ENCODE measurements at regions of chr13 and their contacts with region 1.

Region 1: GRCh38 chr13:48542581-48543341 is 9.9 kb upstream of the RCBTB2 start:
- DNase-seq: no peak
- H3K4me3 Mint-ChIP-seq: no peak overlapping the region
- H3K27ac Mint-ChIP-seq: no peak overlapping the region
- H3K4me1 Mint-ChIP-seq: no peaks in the 10 kb centered on the region
- H3K27me3 Mint-ChIP-seq: peaks cover 2% of the 10 kb centered on the region

Region 2: DNA sequence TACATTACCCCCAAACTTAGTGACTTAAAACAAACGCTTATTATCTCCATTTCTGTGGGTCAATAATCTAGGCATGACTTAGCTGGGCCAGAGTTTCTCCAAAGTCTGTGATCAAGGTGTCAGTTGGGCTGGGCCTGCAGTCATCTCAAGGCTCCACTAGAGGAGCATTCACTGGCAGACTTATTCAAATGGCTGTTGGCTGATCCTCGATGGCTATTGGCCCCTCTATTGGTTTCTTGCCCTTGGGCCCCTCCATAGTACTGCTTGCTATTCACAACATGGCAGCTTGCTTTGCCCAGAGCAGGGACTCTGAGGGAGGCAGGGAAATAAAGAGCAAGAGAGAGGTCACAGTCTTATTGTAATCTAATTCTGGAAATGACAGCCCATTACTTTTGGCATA is 67.5 kb before region 1 on chr13:
- CTCF ChIA-PET with region 1: no interaction called
- intact Hi-C with region 1: no loop called
- DNase-seq: no peak
- H3K4me3 Mint-ChIP-seq: no peak overlapping the region
- H3K27ac Mint-ChIP-seq: no peak overlapping the region
- H3K4me1 Mint-ChIP-seq: no peaks in the 10 kb centered on the region
- H3K27me3 Mint-ChIP-seq: no peaks in the 10 kb centered on the region

Region 3: GRCh38 chr13:48515732-48516131 is 27.0 kb before region 1 on chr13:
- CTCF ChIA-PET with region 1: no interaction called
- intact Hi-C with region 1: loop called (anchors 2 kb)
- DNase-seq: no peak
- H3K4me3 Mint-ChIP-seq: no peak overlapping the region
- H3K27ac Mint-ChIP-seq: no peak overlapping the region
- H3K4me1 Mint-ChIP-seq: no peaks in the 10 kb centered on the region
- H3K27me3 Mint-ChIP-seq: no peaks in the 10 kb centered on the region

Region 4: GRCh38 chr13:48527955-48528354 is 14.8 kb before region 1 on chr13:
- CTCF ChIA-PET with region 1: no interaction called
- intact Hi-C with region 1: no loop called
- DNase-seq: no peak
- H3K4me3 Mint-ChIP-seq: no peak overlapping the region
- H3K27ac Mint-ChIP-seq: no peak overlapping the region
- H3K4me1 Mint-ChIP-seq: peaks cover 11% of the 10 kb centered on the region
- H3K27me3 Mint-ChIP-seq: no peaks in the 10 kb centered on the region

Region 5: DNA sequence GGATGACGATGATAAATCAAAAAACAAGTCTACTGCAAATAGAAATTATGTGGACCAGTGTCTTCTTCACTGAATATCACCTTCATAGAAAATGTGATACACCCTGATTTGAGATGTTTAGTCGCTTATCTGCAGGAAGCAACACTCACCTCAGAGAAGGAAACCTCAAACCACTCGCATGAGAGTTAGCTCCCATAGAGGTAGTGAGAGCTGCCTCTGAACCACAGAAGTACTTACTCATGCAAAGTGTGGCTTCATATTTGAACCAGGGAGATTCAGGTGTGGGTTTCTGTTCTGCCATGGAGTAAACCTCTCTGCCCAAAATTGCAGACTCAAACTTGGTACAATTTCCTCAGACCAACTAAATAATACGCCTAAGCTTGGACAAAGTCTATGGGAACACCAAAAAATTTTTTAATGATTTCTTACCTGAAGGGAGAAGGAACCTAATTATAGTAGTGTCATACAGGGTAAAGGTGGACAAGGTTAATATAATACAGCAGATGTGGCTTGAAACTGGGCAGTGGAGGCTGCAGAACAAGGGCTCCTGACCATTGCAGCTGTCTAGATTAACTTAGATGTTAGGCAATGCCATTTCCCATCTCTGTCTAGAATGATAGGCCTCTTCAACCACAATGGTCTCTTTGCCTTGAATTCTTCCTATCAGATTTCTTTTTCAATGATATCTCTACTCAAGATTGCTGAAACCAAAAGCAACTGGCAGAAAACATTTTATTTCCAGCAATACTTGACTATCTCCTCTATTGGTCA is 19.7 kb after region 1 on chr13:
- CTCF ChIA-PET with region 1: no interaction called
- intact Hi-C with region 1: no loop called
- DNase-seq: peak; percentile 76
- H3K4me3 Mint-ChIP-seq: no peak overlapping the region
- H3K27ac Mint-ChIP-seq: no peak overlapping the region
- H3K4me1 Mint-ChIP-seq: peaks cover 23% of the 10 kb centered on the region
- H3K27me3 Mint-ChIP-seq: peaks cover 47% of the 10 kb centered on the region